ENCODE measurements at regions of chr1 and their contacts with region 1.

Region 1: GRCh38 chr1:23098463-23099170 is 70.0 kb downstream of the LUZP1 start:
- DNase-seq: peak; percentile 59
- ATAC-seq: peak; percentile 84
- H3K4me3 Mint-ChIP-seq: no peak overlapping the region
- H3K27ac Mint-ChIP-seq: no peak overlapping the region
- H3K4me1 Mint-ChIP-seq: peaks cover 38% of the 10 kb centered on the region
- H3K27me3 Mint-ChIP-seq: no peaks in the 10 kb centered on the region
- CTCF ChIP-seq: peak; percentile 40

Region 2: DNA sequence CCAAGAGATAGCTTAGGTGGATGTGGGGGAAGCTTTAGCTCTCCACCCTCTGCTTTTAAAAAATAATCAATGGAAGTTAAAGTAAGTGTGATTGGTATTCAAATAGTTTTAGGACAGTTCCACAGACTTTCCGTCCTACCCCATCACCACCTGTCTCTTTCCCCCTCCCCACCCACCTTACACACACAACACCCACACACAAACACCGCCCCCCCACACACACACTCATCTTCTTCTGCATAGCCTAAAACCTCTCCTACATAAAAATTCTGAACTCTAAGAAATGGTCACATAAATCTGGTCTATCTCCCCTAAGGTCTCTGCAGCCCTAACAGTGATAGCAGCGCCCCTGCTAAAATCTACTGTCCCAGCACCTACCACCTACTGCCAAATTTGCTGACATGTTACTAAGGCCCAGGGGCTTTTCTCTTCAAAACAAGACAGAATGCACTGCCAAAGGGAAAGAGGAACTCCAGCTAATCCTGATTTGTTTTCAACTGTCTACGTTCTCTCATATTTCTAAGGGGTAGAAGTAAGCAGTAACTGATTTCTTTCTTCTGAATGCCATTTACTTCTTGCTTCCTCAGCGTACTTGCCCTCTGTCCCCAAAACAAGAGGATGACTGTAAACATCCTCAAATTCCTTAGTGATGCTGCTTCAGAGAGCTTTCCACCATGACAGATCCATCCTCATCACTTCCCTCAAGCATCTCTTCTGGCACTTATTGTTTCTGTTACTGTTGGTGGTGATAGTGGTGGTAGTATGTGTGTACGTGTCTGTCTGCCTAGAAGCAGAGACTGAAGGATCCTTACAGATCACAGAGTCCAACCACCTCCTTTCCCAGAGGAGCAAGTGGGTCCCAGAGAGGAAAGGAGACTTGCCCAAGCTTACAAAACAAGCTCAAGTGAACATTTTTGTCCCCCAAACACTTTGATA is 13.3 kb after region 1 on chr1:
- CTCF ChIA-PET with region 1: interaction called, 10 read pairs
- POLR2A ChIA-PET with region 1: no interaction called
- DNase-seq: no peak
- ATAC-seq: no peak
- H3K4me3 Mint-ChIP-seq: no peak overlapping the region
- H3K27ac Mint-ChIP-seq: peak overlapping the region; percentile 87; the same call in 1 of the 2 replicates
- H3K4me1 Mint-ChIP-seq: peaks cover 24% of the 10 kb centered on the region
- H3K27me3 Mint-ChIP-seq: no peaks in the 10 kb centered on the region
- CTCF ChIP-seq: no peak

Region 3: GRCh38 chr1:23177438-23178380 is 79.1 kb after region 1 on chr1:
- CTCF ChIA-PET with region 1: interaction called, 156 read pairs
- POLR2A ChIA-PET with region 1: no interaction called
- DNase-seq: peak; percentile 82
- ATAC-seq: peak; percentile 87
- H3K4me3 Mint-ChIP-seq: peak overlapping the region; percentile 75
- H3K27ac Mint-ChIP-seq: no peak overlapping the region
- H3K4me1 Mint-ChIP-seq: no peaks in the 10 kb centered on the region; the same call in 1 of the 2 replicates
- H3K27me3 Mint-ChIP-seq: peaks cover 44% of the 10 kb centered on the region
- CTCF ChIP-seq: no peak

Region 4: DNA sequence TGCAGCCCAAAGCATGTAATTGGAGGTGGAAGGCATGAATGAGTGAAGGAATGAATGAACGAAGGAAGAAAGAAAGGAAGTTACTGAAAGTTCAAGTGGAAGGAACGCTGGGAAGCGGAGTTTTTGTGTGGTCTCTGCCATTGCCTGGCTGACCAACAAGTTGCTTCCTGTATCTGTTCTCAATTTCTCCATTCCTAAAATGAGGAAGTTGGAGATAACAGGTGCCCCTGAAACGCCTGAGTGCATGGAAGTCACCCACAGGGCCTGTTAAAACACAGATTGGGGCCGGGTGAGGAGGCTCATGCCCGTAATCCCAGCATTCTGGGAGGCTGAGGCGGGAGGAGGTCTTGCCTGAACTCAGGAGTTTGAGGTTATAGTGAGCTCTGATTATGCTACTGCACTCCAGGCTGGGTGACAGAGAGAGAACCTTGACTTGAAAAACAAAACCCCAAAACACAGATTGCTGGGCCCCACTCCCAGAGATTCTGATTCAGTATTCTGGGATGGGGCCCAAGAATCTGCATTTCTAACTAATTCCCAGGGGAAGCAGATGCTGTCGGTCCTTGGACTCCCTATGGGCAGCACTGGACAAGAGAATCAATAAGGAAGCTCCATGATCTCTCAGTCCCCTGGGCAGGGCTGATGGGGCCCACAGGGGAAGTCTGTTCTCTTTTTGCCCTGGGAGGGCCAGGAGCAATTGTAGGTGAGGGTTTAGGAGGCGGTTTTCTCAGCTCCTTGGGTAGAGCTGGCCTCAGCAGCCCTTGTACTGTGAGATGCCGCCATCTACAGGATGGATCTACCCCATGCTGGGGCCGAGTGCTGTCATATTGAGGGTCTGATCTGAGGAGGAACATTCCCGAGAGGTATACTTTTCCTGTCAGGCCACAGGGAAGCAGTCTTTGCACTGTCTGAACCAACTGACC is 817.9 kb after region 1 on chr1:
- CTCF ChIA-PET with region 1: no interaction called
- POLR2A ChIA-PET with region 1: interaction called, 10 read pairs
- DNase-seq: peak; percentile 80
- ATAC-seq: peak; percentile 97
- H3K4me3 Mint-ChIP-seq: no peak overlapping the region
- H3K27ac Mint-ChIP-seq: no peak overlapping the region
- H3K4me1 Mint-ChIP-seq: peaks cover 6% of the 10 kb centered on the region
- H3K27me3 Mint-ChIP-seq: peaks cover 6% of the 10 kb centered on the region; the same call in 1 of the 2 replicates
- CTCF ChIP-seq: no peak

Measured in WTC11 (cell line).